HCT116 (cell line): ENCODE measurements at regions of chr7 and their contacts with region 1.

Region 1: DNA sequence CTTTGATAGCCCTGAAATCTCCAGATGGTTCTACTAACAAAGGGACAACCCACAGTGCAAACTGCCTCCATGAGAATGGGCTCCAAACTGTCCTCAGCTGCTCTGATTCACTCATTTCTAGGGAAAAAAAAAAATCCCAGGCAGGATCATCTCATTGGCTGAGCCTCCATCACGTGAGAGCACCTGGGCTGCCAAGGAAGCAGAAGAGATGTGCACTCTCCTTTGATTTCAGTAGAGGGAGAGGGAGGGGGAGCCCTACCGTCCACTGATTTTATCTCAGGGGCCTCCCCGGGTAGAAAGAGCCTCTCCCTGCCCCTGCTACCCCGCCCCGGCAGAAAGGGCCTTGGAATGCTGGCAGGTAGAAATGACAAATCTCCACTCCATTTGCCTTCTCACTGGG is 725.4 kb downstream of the PHTF2 start:
- DNase-seq: no peak
- ATAC-seq: 0 out of 2 replicates have a peak, but pooled peaks have one; percentile 42
- H3K4me3 ChIP-seq: no peak overlapping the region
- H3K27ac ChIP-seq: no peak overlapping the region
- H3K4me1 ChIP-seq: no peaks in the 10 kb centered on the region
- H3K27me3 ChIP-seq: no peaks in the 10 kb centered on the region
- CTCF ChIP-seq: no peak
- POLR2A ChIP-seq: no peak
- RAD21 ChIP-seq: no peak

Region 2: DNA sequence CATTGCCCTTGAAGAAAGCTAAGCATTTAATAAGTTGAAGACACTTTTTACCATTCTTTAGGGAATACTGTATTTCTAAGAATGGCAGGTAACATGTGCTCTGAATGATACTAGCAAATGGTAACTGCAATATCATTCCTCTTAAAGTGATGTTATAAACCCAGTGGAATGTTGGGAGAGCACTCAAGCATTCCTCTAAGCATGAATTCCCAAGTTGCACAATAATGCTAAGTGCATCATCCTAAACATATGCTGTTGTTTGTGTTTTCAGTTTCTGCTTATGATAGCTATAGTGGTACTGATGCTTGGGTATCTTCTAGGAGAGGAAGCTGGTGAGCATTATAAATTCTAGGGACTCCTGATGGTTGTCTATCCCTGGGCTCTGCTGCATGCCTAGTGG is 51.4 kb before region 1 on chr7:
- CTCF ChIA-PET with region 1: no interaction called
- POLR2A ChIA-PET with region 1: no interaction called
- RAD21 ChIA-PET with region 1: no interaction called
- intact Hi-C with region 1: loop called (anchors 5 kb)
- DNase-seq: no peak
- ATAC-seq: no peak
- H3K4me3 ChIP-seq: no peak overlapping the region
- H3K27ac ChIP-seq: no peak overlapping the region
- H3K4me1 ChIP-seq: no peaks in the 10 kb centered on the region
- H3K27me3 ChIP-seq: peaks cover 22% of the 10 kb centered on the region; the same call in 1 of the 2 replicates
- CTCF ChIP-seq: no peak
- POLR2A ChIP-seq: no peak
- RAD21 ChIP-seq: no peak